Adrenal gland (tissue), 19 donors: ENCODE measurements at regions of chr10 and their contacts with region 1.

Region 1: GRCh38 chr10:114779803-114780609 is 41.6 kb upstream of the FHIP2A start:
- DNase-seq: no peak
- H3K4me3 ChIP-seq: no peak overlapping the region
- H3K27ac ChIP-seq: peak overlapping the region in 3 of 5 donors; percentile 19 to 44 (median 36)
- H3K4me1 ChIP-seq: peaks cover 8 to 16% of the 10 kb centered on the region in 2 donors
- H3K27me3 ChIP-seq: no peaks in the 10 kb centered on the region
- CTCF ChIP-seq: no peak
- POLR2A ChIP-seq: no peak

Region 2: GRCh38 chr10:114561008-114561532 is 218.9 kb before region 1 on chr10:
- intact Hi-C with region 1: loop called in 1 of 2 experiments (anchors 5 kb)
- DNase-seq: no peak
- H3K4me3 ChIP-seq: no peak overlapping the region
- H3K27ac ChIP-seq: peak overlapping the region in 1 of 5 donors; percentile 13
- H3K4me1 ChIP-seq: peaks cover 0 to 14% of the 10 kb centered on the region in 2 donors
- H3K27me3 ChIP-seq: no peaks in the 10 kb centered on the region
- CTCF ChIP-seq: no peak
- POLR2A ChIP-seq: no peak

Region 3: DNA sequence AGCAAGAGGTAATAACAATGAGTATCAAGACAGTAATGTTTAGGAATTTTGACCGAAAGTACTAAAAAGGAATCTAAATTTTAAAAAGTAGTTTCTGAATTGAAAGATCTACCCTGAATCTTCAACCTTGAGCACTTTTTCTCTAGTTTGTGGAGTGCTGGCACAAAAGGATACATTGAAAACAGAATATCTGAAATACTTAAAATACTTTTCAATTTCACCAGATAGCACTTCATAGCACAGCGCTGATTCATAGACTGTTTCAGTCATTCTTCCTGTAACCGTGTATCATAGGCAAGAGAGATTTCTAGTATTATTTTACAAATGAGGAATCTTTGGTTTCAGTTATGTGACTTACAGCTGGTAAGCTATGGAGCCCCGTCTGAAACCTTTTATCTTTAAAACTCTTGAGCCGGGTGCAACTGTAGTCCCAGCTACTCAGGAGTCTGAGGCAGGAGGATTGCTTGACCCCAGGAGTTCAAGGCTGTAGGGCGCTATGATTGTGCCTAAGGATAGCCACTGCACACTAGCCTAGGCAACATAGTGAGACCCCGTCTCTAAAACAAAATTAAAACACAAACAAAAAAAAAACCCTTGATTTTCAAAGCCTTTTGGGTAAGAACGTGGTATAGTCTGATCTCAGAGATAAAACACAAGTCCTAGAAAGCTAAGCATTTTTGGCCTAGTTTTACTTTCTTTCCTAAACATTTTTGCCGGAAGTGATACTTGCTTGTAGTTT is 76.7 kb after region 1 on chr10:
- intact Hi-C with region 1: no loop called
- DNase-seq: peak in 4 of 7 donors; percentile 20 to 33 (median 27)
- H3K4me3 ChIP-seq: no peak overlapping the region
- H3K27ac ChIP-seq: peak overlapping the region; percentile 23 to 84 (median 71)
- H3K4me1 ChIP-seq: peaks cover 22 to 31% of the 10 kb centered on the region in 2 donors
- H3K27me3 ChIP-seq: no peaks in the 10 kb centered on the region
- CTCF ChIP-seq: no peak
- POLR2A ChIP-seq: peak in 1 of 2 donors; percentile 30